ENCODE measurements at regions of chr19 and their contacts with region 1.

Region 1: GRCh38 chr19:51546650-51547396 is 15.4 kb upstream of the SIGLEC6 start:
- DNase-seq: peak; percentile 91
- H3K4me3 ChIP-seq: no peak overlapping the region
- H3K27ac ChIP-seq: peak overlapping the region; percentile 89
- H3K4me1 ChIP-seq: peaks cover 28% of the 10 kb centered on the region
- H3K27me3 ChIP-seq: no peaks in the 10 kb centered on the region
- CTCF ChIP-seq: no peak
- POLR2A ChIP-seq: peak; percentile 88

Region 2: DNA sequence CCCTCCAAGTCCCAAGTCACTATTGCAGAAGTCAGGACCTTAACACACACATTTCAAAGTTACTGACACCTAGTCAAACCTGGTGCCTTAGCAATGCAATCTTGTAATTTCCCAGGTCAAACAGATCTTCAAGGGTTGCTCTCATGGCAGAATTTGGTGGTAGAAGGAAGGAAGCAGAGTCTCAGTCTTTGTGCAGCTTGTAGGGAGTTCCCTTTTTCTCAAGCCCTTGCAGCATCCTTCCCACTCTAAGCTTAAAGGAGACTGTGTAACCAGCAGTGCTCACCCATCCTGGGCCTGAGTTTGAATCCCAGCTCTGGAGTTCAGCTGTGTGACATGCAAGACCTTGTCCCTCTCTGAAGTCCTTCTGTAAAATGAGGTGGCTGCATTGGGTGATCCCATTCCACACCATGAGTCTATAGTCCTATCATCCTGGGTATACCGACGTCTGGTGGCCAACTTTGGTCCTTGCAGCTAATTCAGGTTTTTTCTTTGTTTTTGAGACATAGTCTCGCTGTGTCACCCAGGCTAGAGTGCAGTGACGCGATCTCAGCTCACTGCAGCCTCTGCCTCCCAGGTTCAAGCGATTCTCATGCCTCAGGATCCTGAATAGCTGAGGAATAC is 139.2 kb before region 1 on chr19:
- CTCF ChIA-PET with region 1: no interaction called
- POLR2A ChIA-PET with region 1: no interaction called
- dilution Hi-C with region 1: no loop called
- intact Hi-C with region 1: no loop called
- DNase-seq: peak; percentile 27
- H3K4me3 ChIP-seq: no peak overlapping the region
- H3K27ac ChIP-seq: no peak overlapping the region
- H3K4me1 ChIP-seq: no peaks in the 10 kb centered on the region
- H3K27me3 ChIP-seq: no peaks in the 10 kb centered on the region
- CTCF ChIP-seq: peak; percentile 13 to 38
- POLR2A ChIP-seq: no peak

Region 3: GRCh38 chr19:51473009-51473707 is 73.7 kb before region 1 on chr19:
- CTCF ChIA-PET with region 1: interaction called, 3 read pairs
- POLR2A ChIA-PET with region 1: no interaction called
- dilution Hi-C with region 1: no loop called
- intact Hi-C with region 1: loop called (anchors 2 kb)
- DNase-seq: peak; percentile 61
- H3K4me3 ChIP-seq: no peak overlapping the region
- H3K27ac ChIP-seq: no peak overlapping the region
- H3K4me1 ChIP-seq: peaks cover 4% of the 10 kb centered on the region
- H3K27me3 ChIP-seq: no peaks in the 10 kb centered on the region
- CTCF ChIP-seq: peak; percentile 73 to 83
- POLR2A ChIP-seq: no peak

Region 4: GRCh38 chr19:51531349-51532315 is 15.2 kb before region 1 on chr19 and contains the start of gene SIGLEC6:
- CTCF ChIA-PET with region 1: no interaction called
- POLR2A ChIA-PET with region 1: no interaction called
- dilution Hi-C with region 1: no loop called
- intact Hi-C with region 1: loop called (anchors 1 kb)
- DNase-seq: no peak
- H3K4me3 ChIP-seq: no peak within 1 kb of the TSS
- H3K27ac ChIP-seq: no peak within 1 kb of the TSS
- H3K4me1 ChIP-seq: no peaks in the 10 kb centered on the region
- H3K27me3 ChIP-seq: peaks cover 0 to 19% of the 10 kb centered on the region in 2 experiments
- CTCF ChIP-seq: no peak
- POLR2A ChIP-seq: no peak
- total RNA-seq, gene SIGLEC6: not detected in 2 replicates

Region 5: DNA sequence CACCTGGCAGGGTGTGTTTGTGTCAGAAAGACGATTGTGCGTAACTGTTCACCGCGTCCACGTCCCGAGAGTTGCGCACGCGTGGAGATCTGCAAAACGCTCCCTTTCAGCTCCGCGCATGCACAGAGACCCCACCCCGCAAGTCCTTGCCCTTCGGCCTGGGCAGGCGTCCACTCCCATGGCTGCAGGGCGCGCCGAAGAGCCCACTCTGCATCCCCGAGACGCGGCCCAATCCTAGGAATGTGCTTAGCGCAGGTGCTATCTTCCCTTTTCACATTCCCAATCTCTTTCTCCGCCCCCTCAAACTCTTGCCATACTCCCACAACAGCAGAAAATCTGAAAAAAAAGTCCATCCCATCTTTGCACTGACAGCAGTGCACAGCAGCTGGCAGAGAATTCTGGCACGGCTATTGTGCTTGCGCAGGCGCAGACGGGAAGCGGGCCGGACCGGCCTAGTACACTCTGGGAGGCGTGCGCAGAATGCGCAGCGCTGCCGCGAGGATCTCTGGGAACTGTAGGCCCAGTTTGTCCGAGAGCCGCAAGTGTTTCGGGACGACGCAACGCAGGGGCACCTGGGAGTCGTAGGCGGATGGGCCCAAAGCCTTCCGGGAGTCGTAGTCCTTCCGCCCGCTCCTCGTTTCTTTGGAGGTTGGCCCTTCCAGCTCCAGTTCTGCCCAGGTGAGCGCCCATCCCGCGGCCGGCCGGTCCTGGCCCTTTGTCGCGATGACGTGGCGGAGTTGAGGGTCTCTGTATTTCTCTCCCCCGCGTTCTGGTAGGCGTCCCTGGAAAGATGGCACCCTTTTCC is 47.3 kb after region 1 on chr19:
- CTCF ChIA-PET with region 1: no interaction called
- POLR2A ChIA-PET with region 1: no interaction called
- dilution Hi-C with region 1: no loop called
- intact Hi-C with region 1: loop called (anchors 1 kb)
- DNase-seq: peak; percentile 97
- H3K4me3 ChIP-seq: peak overlapping the region; percentile 16 to 53 (median 51)
- H3K27ac ChIP-seq: no peak overlapping the region
- H3K4me1 ChIP-seq: peaks cover 6% of the 10 kb centered on the region
- H3K27me3 ChIP-seq: no peaks in the 10 kb centered on the region
- CTCF ChIP-seq: no peak
- POLR2A ChIP-seq: no peak